Pancreas (tissue), 10 donors: ENCODE measurements at regions of chr11 and their contacts with region 1.

Region 1: DNA sequence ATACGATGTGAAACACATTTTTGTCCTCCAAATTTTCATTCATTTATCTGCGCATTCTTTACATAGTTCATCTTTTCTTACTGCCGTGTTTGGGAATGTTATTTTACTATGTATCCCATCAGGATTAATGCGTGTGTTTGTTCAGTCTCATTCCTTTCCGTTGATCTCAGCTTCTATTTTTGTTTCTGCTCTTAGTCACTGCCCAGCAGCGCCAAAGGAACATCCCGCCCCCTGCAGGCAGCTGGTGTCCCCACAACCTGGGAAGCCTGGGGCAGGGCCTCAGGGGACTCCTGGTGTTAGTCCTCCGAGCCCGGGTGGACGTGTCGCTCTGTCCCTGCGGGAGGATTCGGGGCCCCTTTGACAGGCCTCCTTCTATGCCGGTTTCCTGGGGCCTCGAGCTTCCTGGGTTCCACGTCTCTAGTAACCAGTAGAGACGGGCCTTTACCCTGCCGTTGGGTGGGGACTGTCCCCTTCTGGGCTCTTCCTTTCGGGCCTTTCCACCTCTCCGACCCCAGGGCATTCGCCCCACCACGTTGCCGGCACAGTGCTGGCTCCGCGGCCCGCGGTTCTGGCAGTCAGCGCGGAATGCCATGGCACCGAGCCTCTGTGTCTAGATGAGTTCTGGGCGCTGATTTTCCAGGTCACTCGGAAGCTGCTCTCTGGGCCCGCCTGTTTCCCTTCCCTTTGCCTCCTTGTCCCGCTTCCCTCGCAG is 39.8 kb downstream of the WEE1 start:
- DNase-seq: peak; percentile 93 to 96 (median 96)
- ATAC-seq: peak; percentile 89 to 95 (median 90)
- H3K4me3 ChIP-seq: peak overlapping the region; percentile 1 to 45 (median 34)
- H3K27ac ChIP-seq: peak overlapping the region; percentile 90 to 98 (median 95)
- H3K4me1 ChIP-seq: peaks cover 4 to 14% (median 5%) of the 10 kb centered on the region in 3 donors
- H3K27me3 ChIP-seq: no peaks in the 10 kb centered on the region
- CTCF ChIP-seq: peak; percentile 87 to 92 (median 90)

Region 2: GRCh38 chr11:9341638-9342137 is 271.6 kb before region 1 on chr11:
- intact Hi-C with region 1: no loop called
- DNase-seq: no peak
- ATAC-seq: no peak
- H3K4me3 ChIP-seq: no peak overlapping the region
- H3K27ac ChIP-seq: no peak overlapping the region
- H3K4me1 ChIP-seq: no peaks in the 10 kb centered on the region
- H3K27me3 ChIP-seq: no peaks in the 10 kb centered on the region
- CTCF ChIP-seq: no peak

Region 3: DNA sequence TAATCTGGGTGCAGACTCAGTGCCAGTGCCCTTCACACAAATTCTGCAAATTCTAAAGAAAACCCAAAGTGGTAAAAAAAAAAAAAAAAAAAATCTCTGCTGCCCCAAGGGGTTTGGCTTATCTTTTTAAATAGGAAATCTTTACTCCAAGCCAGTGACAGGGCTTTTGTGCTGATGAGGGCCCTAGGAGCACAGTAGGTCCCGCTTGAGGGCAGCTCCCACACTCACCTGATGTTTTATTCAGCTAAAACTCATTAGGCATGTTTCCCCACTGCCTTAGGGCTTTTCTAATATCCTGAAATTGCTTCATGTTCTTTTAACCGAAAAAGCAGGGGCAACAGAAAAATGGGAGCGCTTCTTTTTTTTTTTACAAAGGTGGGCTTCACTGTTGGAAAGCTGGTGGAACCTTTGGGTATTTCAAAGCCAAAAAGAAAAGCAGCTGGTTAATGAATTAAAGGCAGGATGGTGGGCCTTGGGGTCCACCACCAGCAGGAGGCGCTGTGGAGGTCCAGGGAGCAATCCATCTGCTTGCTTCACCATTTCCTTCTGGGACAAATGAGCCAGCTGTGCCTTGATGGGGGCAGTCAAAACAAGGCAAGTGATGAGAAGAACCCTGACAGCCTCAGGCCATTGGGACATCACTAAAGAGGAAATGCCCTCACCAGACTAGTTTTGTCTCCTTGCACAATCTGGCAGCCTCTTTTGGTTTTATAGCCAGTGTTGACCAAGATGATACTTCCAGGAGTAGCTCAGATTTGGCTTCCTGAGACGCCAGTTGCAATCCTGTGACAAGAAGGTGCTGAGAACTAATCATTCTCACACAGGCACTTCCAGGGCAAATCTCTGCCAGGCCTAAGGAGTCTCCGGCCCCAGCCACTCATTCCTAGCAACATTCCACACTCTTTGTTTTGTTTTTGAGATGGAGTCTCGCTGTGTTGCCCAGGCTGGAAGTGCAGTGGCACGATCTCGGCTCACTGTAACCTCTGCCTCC is 78.2 kb before region 1 on chr11:
- intact Hi-C with region 1: loop called in 1 of 3 experiments (anchors 5 kb)
- DNase-seq: peak; percentile 64 to 97 (median 80)
- ATAC-seq: peak; percentile 72 to 97 (median 88)
- H3K4me3 ChIP-seq: no peak overlapping the region
- H3K27ac ChIP-seq: no peak overlapping the region
- H3K4me1 ChIP-seq: no peaks in the 10 kb centered on the region
- H3K27me3 ChIP-seq: no peaks in the 10 kb centered on the region
- CTCF ChIP-seq: peak; percentile 65 to 74 (median 71)

Region 4: DNA sequence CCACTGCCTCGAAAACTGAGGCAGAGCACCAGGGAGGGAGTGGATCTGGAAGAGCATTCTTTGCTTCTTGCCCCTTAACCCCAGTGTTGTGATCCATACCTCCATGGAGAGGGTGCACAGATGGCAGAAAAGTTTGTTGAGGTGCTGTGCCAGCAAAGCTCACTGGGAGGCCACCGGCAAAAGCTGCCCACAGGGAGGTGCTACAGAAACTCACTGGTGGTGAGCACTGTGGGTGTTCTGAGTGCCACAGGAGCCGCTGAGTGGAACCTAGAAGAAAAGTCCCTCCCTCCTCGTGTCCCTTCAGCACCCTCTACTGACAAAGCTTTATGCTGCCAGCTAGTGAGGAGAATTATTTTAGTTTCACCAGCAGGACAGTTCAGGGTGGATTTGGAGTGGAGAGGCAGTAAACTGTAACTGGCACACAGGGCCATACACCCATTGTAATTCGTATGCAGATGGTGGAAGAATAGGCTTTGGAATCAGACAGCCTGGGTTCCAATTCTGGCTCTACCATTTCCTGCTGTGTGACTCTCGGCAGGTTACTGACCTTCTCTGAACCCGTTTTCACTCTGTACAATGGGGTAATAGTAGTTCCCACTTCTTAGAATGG is 135.2 kb after region 1 on chr11:
- intact Hi-C with region 1: loop called in 1 of 3 experiments (anchors 5 kb)
- DNase-seq: peak in 3 of 6 donors; percentile 33 to 46 (median 44)
- ATAC-seq: peak; percentile 67 to 91 (median 90)
- H3K4me3 ChIP-seq: no peak overlapping the region
- H3K27ac ChIP-seq: no peak overlapping the region
- H3K4me1 ChIP-seq: no peaks in the 10 kb centered on the region
- H3K27me3 ChIP-seq: no peaks in the 10 kb centered on the region
- CTCF ChIP-seq: peak in 3 of 4 donors; percentile 14 to 35 (median 22)

Region 5: DNA sequence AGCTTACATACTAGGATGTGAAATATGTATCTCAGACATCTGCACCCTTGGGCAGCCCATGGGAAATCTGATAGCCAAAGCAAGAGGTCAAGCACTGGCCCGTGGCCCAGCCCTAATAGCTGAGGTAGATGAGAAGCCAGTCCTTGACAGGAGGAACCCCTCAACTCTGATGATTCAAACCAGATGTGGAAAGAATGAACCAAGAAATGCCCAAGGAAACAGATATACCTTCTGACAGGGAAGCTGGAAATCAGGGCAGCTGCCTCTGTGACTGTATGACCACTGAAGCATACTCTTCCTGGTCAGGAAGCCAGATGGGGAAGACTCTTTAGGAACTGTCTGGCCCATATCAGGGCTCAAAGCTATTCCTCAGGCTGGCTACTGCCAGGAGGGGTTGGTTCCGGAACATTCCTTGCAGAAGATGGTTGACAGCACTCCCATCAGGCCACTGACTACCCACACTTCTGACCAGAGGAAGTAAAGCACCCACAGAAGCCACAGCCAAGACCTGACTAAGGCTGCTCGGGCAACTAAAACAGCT is 174.8 kb after region 1 on chr11:
- intact Hi-C with region 1: no loop called
- DNase-seq: peak in 1 of 6 donors; percentile 33
- ATAC-seq: peak in 3 of 4 donors; percentile 31 to 65 (median 43)
- H3K4me3 ChIP-seq: no peak overlapping the region
- H3K27ac ChIP-seq: no peak overlapping the region
- H3K4me1 ChIP-seq: no peaks in the 10 kb centered on the region
- H3K27me3 ChIP-seq: no peaks in the 10 kb centered on the region
- CTCF ChIP-seq: no peak

Region 6: GRCh38 chr11:9922806-9923205 is 309.5 kb after region 1 on chr11:
- intact Hi-C with region 1: no loop called
- DNase-seq: no peak
- ATAC-seq: no peak
- H3K4me3 ChIP-seq: no peak overlapping the region
- H3K27ac ChIP-seq: no peak overlapping the region
- H3K4me1 ChIP-seq: no peaks in the 10 kb centered on the region
- H3K27me3 ChIP-seq: no peaks in the 10 kb centered on the region
- CTCF ChIP-seq: no peak